IMR-90 (cell line): ENCODE measurements at regions of chr4 and their contacts with region 1.

Region 1: GRCh38 chr4:183398227-183399125 is 46.0 kb upstream of the CDKN2AIP start:
- DNase-seq: peak; percentile 69
- ATAC-seq: peak; percentile 98
- H3K4me3 ChIP-seq: peak overlapping the region; percentile 40
- H3K27ac ChIP-seq: no peak overlapping the region; the same call in 1 of the 2 replicates
- H3K4me1 ChIP-seq: peaks cover 4% of the 10 kb centered on the region; the same call in 1 of the 2 replicates
- H3K27me3 ChIP-seq: peaks cover 5% of the 10 kb centered on the region; the same call in 1 of the 2 replicates
- CTCF ChIP-seq: peak; percentile 75
- POLR2A ChIP-seq: no peak
- RAD21 ChIP-seq: peak; percentile 64

Region 2: GRCh38 chr4:182818926-182819730 is 579.3 kb before region 1 on chr4:
- CTCF ChIA-PET with region 1: no interaction called
- POLR2A ChIA-PET with region 1: no interaction called
- dilution Hi-C with region 1: no loop called
- in situ Hi-C with region 1: no loop called
- intact Hi-C with region 1: no loop called
- DNase-seq: no peak
- ATAC-seq: no peak
- H3K4me3 ChIP-seq: no peak overlapping the region
- H3K27ac ChIP-seq: no peak overlapping the region
- H3K4me1 ChIP-seq: no peaks in the 10 kb centered on the region
- H3K27me3 ChIP-seq: no peaks in the 10 kb centered on the region
- CTCF ChIP-seq: no peak
- POLR2A ChIP-seq: no peak
- RAD21 ChIP-seq: no peak

Region 3: GRCh38 chr4:182938205-182938645 is 460.3 kb before region 1 on chr4:
- CTCF ChIA-PET with region 1: no interaction called
- POLR2A ChIA-PET with region 1: no interaction called
- dilution Hi-C with region 1: no loop called
- in situ Hi-C with region 1: loop called (anchors 10 kb)
- intact Hi-C with region 1: loop called (anchors 5 kb)
- DNase-seq: peak; percentile 56
- ATAC-seq: peak; percentile 99
- H3K4me3 ChIP-seq: no peak overlapping the region
- H3K27ac ChIP-seq: no peak overlapping the region
- H3K4me1 ChIP-seq: peaks cover 2% of the 10 kb centered on the region; the same call in 1 of the 2 replicates
- H3K27me3 ChIP-seq: peaks cover 11% of the 10 kb centered on the region
- CTCF ChIP-seq: peak; percentile 90
- POLR2A ChIP-seq: no peak; the same call in 1 of the 2 replicates
- RAD21 ChIP-seq: peak; percentile 95

Region 4: DNA sequence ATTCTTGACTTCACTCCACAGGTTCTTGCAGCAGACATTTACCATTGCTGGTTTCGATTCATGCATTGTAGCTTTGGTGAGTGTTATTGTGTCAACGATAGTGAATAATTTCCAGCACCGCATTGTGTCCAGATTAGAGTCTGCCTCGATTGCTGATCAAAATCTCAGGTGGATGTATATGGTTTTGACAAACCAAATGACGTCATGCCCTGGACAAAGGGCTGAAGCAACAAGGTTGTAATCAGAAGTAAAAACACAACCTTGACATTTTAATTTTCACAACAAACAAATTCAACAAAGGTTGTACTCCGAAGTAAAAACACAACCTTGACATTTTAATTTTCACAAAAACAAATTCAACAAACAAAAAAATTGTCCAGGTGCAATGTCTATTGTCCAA is 380.5 kb before region 1 on chr4:
- CTCF ChIA-PET with region 1: no interaction called
- POLR2A ChIA-PET with region 1: no interaction called
- dilution Hi-C with region 1: no loop called
- in situ Hi-C with region 1: no loop called
- intact Hi-C with region 1: no loop called
- DNase-seq: no peak
- ATAC-seq: no peak
- H3K4me3 ChIP-seq: no peak overlapping the region
- H3K27ac ChIP-seq: no peak overlapping the region
- H3K4me1 ChIP-seq: no peaks in the 10 kb centered on the region
- H3K27me3 ChIP-seq: peaks cover 64% of the 10 kb centered on the region
- CTCF ChIP-seq: no peak
- POLR2A ChIP-seq: no peak
- RAD21 ChIP-seq: no peak

Region 5: DNA sequence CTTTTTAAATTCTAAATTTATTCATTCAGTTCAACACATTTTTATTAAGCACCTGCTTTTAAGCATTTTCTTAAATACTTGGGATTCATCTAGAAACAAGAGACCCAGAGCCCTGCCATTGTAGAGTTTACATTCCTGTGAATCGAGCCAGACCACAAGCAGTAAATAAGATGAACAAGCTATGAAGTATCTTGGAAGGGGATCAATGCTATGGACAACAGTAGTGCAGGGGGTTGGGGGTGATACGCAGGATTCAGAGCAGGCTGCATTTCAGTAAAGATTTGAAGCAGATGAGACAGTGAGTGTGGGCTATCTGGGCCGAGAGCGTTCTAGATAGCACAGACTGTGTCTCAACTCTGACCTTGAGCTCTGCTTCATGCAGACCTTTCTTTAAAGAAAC is 113.5 kb before region 1 on chr4:
- CTCF ChIA-PET with region 1: interaction called, 5 read pairs
- POLR2A ChIA-PET with region 1: no interaction called
- dilution Hi-C with region 1: no loop called
- in situ Hi-C with region 1: no loop called
- intact Hi-C with region 1: loop called (anchors 1 kb)
- DNase-seq: peak; percentile 95
- ATAC-seq: peak; percentile 95
- H3K4me3 ChIP-seq: no peak overlapping the region
- H3K27ac ChIP-seq: peak overlapping the region; percentile 57; the same call in 1 of the 2 replicates
- H3K4me1 ChIP-seq: peaks cover 13% of the 10 kb centered on the region
- H3K27me3 ChIP-seq: no peaks in the 10 kb centered on the region
- CTCF ChIP-seq: no peak
- POLR2A ChIP-seq: no peak
- RAD21 ChIP-seq: 0 out of 2 replicates have a peak, but pooled peaks have one; percentile 15

Region 6: DNA sequence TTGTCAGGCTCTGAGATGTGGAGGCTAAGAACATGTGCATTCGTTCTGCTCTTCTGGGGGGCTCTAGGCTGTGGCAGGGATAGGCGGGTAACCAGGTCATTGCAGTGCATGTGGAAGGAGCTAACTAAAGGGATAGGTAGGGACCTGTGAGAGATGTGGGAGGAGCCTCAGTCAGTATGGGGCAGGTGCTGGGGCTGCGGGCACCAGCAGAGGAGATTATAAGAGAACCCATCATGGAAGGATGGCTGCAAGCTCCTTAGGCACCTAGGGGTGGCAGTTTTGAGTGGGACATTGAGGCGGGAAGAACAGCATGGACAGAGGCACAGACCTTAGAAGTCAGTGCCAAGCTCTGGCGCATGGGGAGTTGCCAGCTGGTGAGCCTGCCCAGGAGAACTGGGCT is 85.6 kb before region 1 on chr4:
- CTCF ChIA-PET with region 1: no interaction called
- POLR2A ChIA-PET with region 1: no interaction called
- dilution Hi-C with region 1: no loop called
- in situ Hi-C with region 1: no loop called
- intact Hi-C with region 1: loop called (anchors 5 kb)
- DNase-seq: no peak
- ATAC-seq: no peak
- H3K4me3 ChIP-seq: no peak overlapping the region
- H3K27ac ChIP-seq: no peak overlapping the region
- H3K4me1 ChIP-seq: peaks cover 4% of the 10 kb centered on the region; the same call in 1 of the 2 replicates
- H3K27me3 ChIP-seq: no peaks in the 10 kb centered on the region
- CTCF ChIP-seq: no peak
- POLR2A ChIP-seq: no peak
- RAD21 ChIP-seq: no peak